Activated CD8-positive, alpha-beta T cell treated with anti-CD3 and anti-CD28 coated beads, Interleukin-2, amount 10 ng/mL, durations not matched to agents 7 days and 5 days (primary cell): ENCODE measurements at regions of chr12 and their contacts with region 1.

Region 1: GRCh38 chr12:65169320-65170208 is at the start of gene LEMD3:
- DNase-seq: peak; percentile 96
- ATAC-seq: peak; percentile 90
- H3K4me3 Mint-ChIP-seq: peak within 1 kb of the TSS; percentile 99
- H3K27ac Mint-ChIP-seq: peak within 1 kb of the TSS; percentile 97
- H3K4me1 Mint-ChIP-seq: peaks cover 27% of the 10 kb centered on the region
- H3K27me3 Mint-ChIP-seq: no peaks in the 10 kb centered on the region
- total RNA-seq, gene LEMD3: 35.9 to 36.1 TPM

Region 2: GRCh38 chr12:64946132-64946829 is 223.3 kb before region 1 on chr12:
- CTCF ChIA-PET with region 1: no interaction called
- POLR2A ChIA-PET with region 1: no interaction called
- DNase-seq: no peak
- ATAC-seq: no peak
- H3K4me3 Mint-ChIP-seq: no peak overlapping the region
- H3K27ac Mint-ChIP-seq: no peak overlapping the region
- H3K4me1 Mint-ChIP-seq: peaks cover 12% of the 10 kb centered on the region
- H3K27me3 Mint-ChIP-seq: peaks cover 7% of the 10 kb centered on the region

Region 3: DNA sequence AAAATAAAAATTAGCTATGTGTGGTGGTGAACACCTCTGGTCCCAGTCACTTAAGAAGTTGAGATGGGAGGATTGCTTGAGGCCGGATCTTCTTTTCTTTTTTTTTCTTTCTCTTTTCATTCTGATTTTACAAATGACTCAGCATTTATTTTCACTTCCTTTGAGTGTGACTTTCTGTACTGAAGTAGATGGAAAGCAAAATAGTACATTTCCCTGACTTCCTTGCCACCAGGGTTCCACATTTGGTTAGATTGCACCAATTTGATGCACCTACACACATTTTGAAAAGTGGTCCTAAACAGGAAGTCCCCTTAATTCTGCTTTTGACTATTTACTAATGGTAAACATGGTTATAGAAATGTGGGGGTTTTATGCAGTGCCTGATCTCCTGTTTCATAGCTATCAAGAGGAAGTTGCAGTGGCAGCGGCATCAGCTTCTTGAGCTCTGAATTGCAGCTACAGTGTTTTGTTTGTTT is 13.2 kb before region 1 on chr12:
- CTCF ChIA-PET with region 1: interaction called, 41 read pairs
- POLR2A ChIA-PET with region 1: interaction called, 71 read pairs
- DNase-seq: peak; percentile 46
- ATAC-seq: peak; percentile 75
- H3K4me3 Mint-ChIP-seq: peak overlapping the region; percentile 46
- H3K27ac Mint-ChIP-seq: peak overlapping the region; percentile 79
- H3K4me1 Mint-ChIP-seq: peaks cover 17% of the 10 kb centered on the region
- H3K27me3 Mint-ChIP-seq: peaks cover 10% of the 10 kb centered on the region

Region 4: GRCh38 chr12:65182012-65182739 is 12.6 kb after region 1 on chr12:
- CTCF ChIA-PET with region 1: interaction called, 8 read pairs
- POLR2A ChIA-PET with region 1: interaction called, 32 read pairs
- DNase-seq: no peak
- ATAC-seq: no peak
- H3K4me3 Mint-ChIP-seq: no peak overlapping the region
- H3K27ac Mint-ChIP-seq: no peak overlapping the region
- H3K4me1 Mint-ChIP-seq: peaks cover 40% of the 10 kb centered on the region
- H3K27me3 Mint-ChIP-seq: no peaks in the 10 kb centered on the region

Region 5: GRCh38 chr12:65209655-65210043 is 40.1 kb after region 1 on chr12:
- CTCF ChIA-PET with region 1: interaction called, 13 read pairs
- POLR2A ChIA-PET with region 1: interaction called, 16 read pairs
- DNase-seq: no peak
- ATAC-seq: peak; percentile 68
- H3K4me3 Mint-ChIP-seq: peak overlapping the region; percentile 73
- H3K27ac Mint-ChIP-seq: peak overlapping the region; percentile 93
- H3K4me1 Mint-ChIP-seq: peaks cover 51% of the 10 kb centered on the region
- H3K27me3 Mint-ChIP-seq: no peaks in the 10 kb centered on the region

Region 6: GRCh38 chr12:65269603-65270002 is 100.0 kb after region 1 on chr12:
- CTCF ChIA-PET with region 1: no interaction called
- POLR2A ChIA-PET with region 1: no interaction called
- DNase-seq: no peak
- ATAC-seq: no peak
- H3K4me3 Mint-ChIP-seq: no peak overlapping the region
- H3K27ac Mint-ChIP-seq: no peak overlapping the region
- H3K4me1 Mint-ChIP-seq: no peaks in the 10 kb centered on the region
- H3K27me3 Mint-ChIP-seq: peaks cover 25% of the 10 kb centered on the region